RWPE1 (cell line): ENCODE measurements at regions of chr12 and their contacts with region 1.

Region 1: DNA sequence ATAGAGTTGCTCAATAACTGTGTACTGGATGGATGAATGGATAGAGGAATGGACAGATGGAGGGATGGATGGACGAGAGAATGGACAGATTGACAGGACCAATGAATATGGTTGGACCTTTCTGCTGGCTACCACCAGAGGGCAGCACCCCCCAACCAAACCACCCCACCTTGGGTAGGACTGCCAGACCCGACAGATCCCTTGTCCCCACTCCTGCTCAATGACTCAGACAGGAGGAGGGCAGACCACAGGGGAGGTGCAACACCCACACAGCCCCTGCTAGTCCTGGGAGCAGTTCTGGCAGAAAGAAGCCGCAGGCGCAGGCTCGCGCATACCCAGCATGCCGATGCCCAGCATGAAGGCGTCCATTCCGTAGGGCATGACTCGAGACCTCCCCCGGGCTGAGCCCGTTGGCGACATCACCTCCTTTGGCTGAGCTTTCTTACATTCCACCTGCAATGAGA is 12.4 kb downstream of the MSI1 start:
- DNase-seq: peak; percentile 94
- H3K27ac ChIP-seq: no peak overlapping the region
- CTCF ChIP-seq: peak; percentile 88

Region 2: GRCh38 chr12:120388691-120389481 is 32.3 kb after region 1 on chr12:
- CTCF ChIA-PET with region 1: interaction called, 5 read pairs
- POLR2A ChIA-PET with region 1: interaction called, 13 read pairs
- DNase-seq: no peak
- H3K27ac ChIP-seq: no peak overlapping the region
- CTCF ChIP-seq: no peak

Region 3: GRCh38 chr12:120432772-120433525 is 76.3 kb after region 1 on chr12:
- CTCF ChIA-PET with region 1: interaction called, 10 read pairs
- POLR2A ChIA-PET with region 1: no interaction called
- DNase-seq: no peak
- H3K27ac ChIP-seq: no peak overlapping the region
- CTCF ChIP-seq: no peak